CD4-positive, alpha-beta memory T cell (primary cell): ENCODE measurements at regions of chr20 and their contacts with region 1.

Region 1: DNA sequence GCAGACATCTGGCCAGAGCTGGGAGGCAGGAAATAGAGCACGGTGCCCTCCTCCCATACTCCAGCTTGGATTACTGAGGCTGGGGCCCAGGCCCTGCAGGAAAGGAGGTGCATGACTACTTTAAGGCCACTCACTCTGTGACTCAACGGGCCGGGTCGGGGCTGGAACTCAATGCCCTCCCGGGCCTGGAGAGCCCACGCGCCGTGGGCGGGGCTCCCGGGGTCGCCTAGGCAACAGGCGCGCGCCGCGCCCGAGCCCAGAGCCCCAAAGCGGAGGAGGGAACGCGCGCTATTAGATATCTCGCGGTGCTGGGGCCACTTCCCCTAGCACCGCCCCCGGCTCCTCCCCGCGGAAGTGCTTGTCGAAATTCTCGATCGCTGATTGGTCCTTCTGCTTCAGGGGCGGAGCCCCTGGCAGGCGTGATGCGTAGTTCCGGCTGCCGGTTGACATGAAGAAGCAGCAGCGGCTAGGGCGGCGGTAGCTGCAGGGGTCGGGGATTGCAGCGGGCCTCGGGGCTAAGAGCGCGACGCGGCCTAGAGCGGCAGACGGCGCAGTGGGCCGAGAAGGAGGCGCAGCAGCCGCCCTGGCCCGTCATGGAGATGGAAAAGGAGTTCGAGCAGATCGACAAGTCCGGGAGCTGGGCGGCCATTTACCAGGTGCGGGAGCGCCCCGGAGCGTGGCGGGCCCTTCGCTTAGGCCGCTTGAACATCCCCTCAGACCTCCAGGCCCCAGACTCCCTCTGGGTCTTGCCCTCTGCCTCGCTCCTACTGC is at the start of gene PTPN1:
- DNase-seq: peak; percentile 98 to 99 (median 99)
- H3K4me3 ChIP-seq: peak within 1 kb of the TSS; percentile 73 to 91
- H3K4me3 Mint-ChIP-seq: peak within 1 kb of the TSS; percentile 94 to 98 (median 96)
- H3K27ac ChIP-seq: peak within 1 kb of the TSS; percentile 91
- H3K27ac Mint-ChIP-seq: peak within 1 kb of the TSS; percentile 93 to 98 (median 96)
- H3K4me1 ChIP-seq: peaks cover 50% of the 10 kb centered on the region
- H3K4me1 Mint-ChIP-seq: peaks cover 35 to 56% (median 45%) of the 10 kb centered on the region in 4 donors
- H3K27me3 ChIP-seq: no peaks in the 10 kb centered on the region
- H3K27me3 Mint-ChIP-seq: no peaks in the 10 kb centered on the region
- total RNA-seq, gene PTPN1: 59.5 to 61.5 TPM

Region 2: GRCh38 chr20:50478162-50479036 is 31.7 kb before region 1 on chr20:
- CTCF ChIA-PET with region 1: interaction called, 25 read pairs
- POLR2A ChIA-PET with region 1: interaction called, 27 read pairs
- intact Hi-C with region 1: loop called (anchors 2 kb)
- DNase-seq: peak; percentile 74 to 82 (median 75)
- H3K4me3 ChIP-seq: no peak overlapping the region
- H3K4me3 Mint-ChIP-seq: peak overlapping the region in 2 of 8 donors; percentile 4 to 25
- H3K27ac ChIP-seq: no peak overlapping the region
- H3K27ac Mint-ChIP-seq: peak overlapping the region in 4 of 7 donors; percentile 5 to 37 (median 22)
- H3K4me1 ChIP-seq: peaks cover 20% of the 10 kb centered on the region
- H3K4me1 Mint-ChIP-seq: peaks cover 13 to 23% (median 21%) of the 10 kb centered on the region in 4 donors
- H3K27me3 ChIP-seq: no peaks in the 10 kb centered on the region
- H3K27me3 Mint-ChIP-seq: no peaks in the 10 kb centered on the region

Region 3: DNA sequence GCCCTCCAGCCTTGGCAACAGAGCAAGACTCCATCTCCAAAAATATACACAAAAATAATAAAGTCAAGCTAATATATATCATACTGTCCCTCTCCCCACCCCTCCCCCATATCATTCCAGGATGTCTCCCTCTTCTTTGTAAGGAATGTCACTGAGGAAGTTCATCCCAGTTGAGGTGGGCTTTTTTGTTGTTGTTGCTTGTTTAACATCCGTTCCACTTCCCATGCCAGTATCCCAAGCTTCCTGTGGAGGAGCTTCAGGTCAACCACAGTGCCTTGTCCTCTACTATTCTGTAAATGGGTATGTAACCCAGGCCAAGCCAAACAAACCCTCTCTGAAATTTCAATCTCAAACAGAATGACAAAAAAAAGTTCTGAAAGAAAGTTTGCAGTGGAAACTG is 19.0 kb before region 1 on chr20:
- CTCF ChIA-PET with region 1: interaction called, 3 read pairs
- POLR2A ChIA-PET with region 1: interaction called, 10 read pairs
- intact Hi-C with region 1: no loop called
- DNase-seq: no peak
- H3K4me3 ChIP-seq: no peak overlapping the region
- H3K4me3 Mint-ChIP-seq: no peak overlapping the region
- H3K27ac ChIP-seq: no peak overlapping the region
- H3K27ac Mint-ChIP-seq: no peak overlapping the region
- H3K4me1 ChIP-seq: no peaks in the 10 kb centered on the region
- H3K4me1 Mint-ChIP-seq: no peaks in the 10 kb centered on the region
- H3K27me3 ChIP-seq: no peaks in the 10 kb centered on the region
- H3K27me3 Mint-ChIP-seq: peaks cover 0 to 4% of the 10 kb centered on the region in 2 donors

Region 4: DNA sequence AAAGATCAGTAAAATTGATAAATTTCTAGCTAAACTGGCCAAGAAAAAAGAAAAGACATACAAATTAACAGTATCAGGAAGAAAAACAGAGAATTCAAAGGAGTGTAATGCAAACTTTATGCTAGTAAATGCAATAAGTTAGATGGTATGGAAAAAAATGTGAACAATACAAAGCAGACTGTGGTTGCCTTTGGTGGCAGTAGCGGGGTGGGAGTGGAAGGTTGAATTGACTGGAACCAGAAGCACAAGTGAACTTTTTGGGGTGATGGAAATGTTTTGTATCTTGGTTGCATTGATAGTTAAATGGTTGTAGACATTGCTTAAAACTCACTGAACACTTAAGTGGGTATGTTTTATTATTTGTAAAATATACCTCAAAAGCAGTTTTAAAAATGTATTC is 45.1 kb after region 1 on chr20:
- CTCF ChIA-PET with region 1: interaction called, 12 read pairs
- POLR2A ChIA-PET with region 1: interaction called, 12 read pairs
- intact Hi-C with region 1: no loop called
- DNase-seq: no peak
- H3K4me3 ChIP-seq: no peak overlapping the region
- H3K4me3 Mint-ChIP-seq: no peak overlapping the region
- H3K27ac ChIP-seq: no peak overlapping the region
- H3K27ac Mint-ChIP-seq: no peak overlapping the region
- H3K4me1 ChIP-seq: peaks cover 69% of the 10 kb centered on the region
- H3K4me1 Mint-ChIP-seq: peaks cover 23 to 41% (median 40%) of the 10 kb centered on the region in 4 donors
- H3K27me3 ChIP-seq: no peaks in the 10 kb centered on the region
- H3K27me3 Mint-ChIP-seq: no peaks in the 10 kb centered on the region

Region 5: GRCh38 chr20:50569864-50570836 is 60.0 kb after region 1 on chr20:
- CTCF ChIA-PET with region 1: interaction called, 244 read pairs
- POLR2A ChIA-PET with region 1: interaction called, 9 read pairs
- intact Hi-C with region 1: no loop called
- DNase-seq: peak; percentile 30 to 66 (median 39)
- H3K4me3 ChIP-seq: no peak overlapping the region
- H3K4me3 Mint-ChIP-seq: peak overlapping the region in 6 of 8 donors; percentile 5 to 81 (median 56)
- H3K27ac ChIP-seq: no peak overlapping the region
- H3K27ac Mint-ChIP-seq: peak overlapping the region; percentile 68 to 86 (median 84)
- H3K4me1 ChIP-seq: peaks cover 36% of the 10 kb centered on the region
- H3K4me1 Mint-ChIP-seq: peaks cover 39 to 89% (median 65%) of the 10 kb centered on the region in 4 donors
- H3K27me3 ChIP-seq: no peaks in the 10 kb centered on the region
- H3K27me3 Mint-ChIP-seq: no peaks in the 10 kb centered on the region

Region 6: GRCh38 chr20:50731055-50731871 is 221.1 kb after region 1 on chr20 and contains the start of gene PARD6B:
- CTCF ChIA-PET with region 1: no interaction called
- POLR2A ChIA-PET with region 1: interaction called, 5 read pairs
- intact Hi-C with region 1: loop called (anchors 1 kb)
- DNase-seq: peak; percentile 99 to 100 (median 100)
- H3K4me3 ChIP-seq: peak within 1 kb of the TSS; percentile 66 to 72
- H3K4me3 Mint-ChIP-seq: peak within 1 kb of the TSS; percentile 90 to 95 (median 92)
- H3K27ac ChIP-seq: peak within 1 kb of the TSS; percentile 55
- H3K27ac Mint-ChIP-seq: peak within 1 kb of the TSS; percentile 83 to 91 (median 87)
- H3K4me1 ChIP-seq: peaks cover 21% of the 10 kb centered on the region
- H3K4me1 Mint-ChIP-seq: peaks cover 16 to 37% (median 24%) of the 10 kb centered on the region in 4 donors
- H3K27me3 ChIP-seq: no peaks in the 10 kb centered on the region
- H3K27me3 Mint-ChIP-seq: no peaks in the 10 kb centered on the region
- total RNA-seq, gene PARD6B: 10.9 to 12.7 TPM